ENCODE measurements at regions of chr19 and their contacts with region 1.

Region 1: DNA sequence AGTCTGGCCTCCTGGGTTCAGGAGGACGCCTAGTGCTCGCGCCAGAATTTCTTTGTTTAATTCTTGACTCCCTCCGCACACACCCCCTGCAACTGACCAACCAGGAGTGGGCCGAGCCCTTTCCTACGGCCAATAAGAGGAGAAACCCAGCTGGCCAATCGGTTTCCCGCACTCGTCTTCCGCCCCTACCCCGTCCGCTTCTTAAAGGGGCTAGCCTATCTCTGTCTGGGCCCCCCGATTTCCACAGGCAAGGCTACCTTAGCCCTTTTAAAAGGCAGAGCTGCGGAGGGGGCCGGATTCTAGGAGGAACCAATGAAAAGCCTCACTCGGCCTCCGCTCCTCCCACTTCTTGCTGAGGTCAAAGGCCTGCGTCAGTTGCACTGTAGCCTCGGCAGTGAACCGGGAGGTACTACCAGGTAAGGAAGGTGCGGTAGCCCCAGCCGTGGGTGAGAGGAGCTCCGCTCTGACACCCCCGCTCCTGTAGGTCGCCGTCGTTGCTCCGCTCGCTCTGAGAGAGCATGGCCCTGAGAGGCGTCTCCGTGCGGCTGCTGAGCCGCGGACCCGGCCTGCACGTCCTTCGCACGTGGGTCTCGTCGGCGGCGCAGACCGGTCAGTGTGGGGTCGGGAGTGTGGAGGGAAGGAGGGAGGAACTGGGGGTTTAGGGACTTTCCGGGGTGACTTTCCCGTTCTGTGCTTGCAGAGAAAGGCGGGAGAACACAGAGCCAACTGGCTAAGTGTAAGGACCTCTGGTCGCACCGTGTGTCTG is at the start of gene GCDH:
- DNase-seq: peak; percentile 96
- H3K4me3 Mint-ChIP-seq: peak within 1 kb of the TSS; percentile 95
- H3K27ac Mint-ChIP-seq: peak within 1 kb of the TSS; percentile 81
- H3K4me1 Mint-ChIP-seq: peaks cover 9% of the 10 kb centered on the region
- H3K27me3 Mint-ChIP-seq: no peaks in the 10 kb centered on the region
- total RNA-seq, gene GCDH: 51.6 and 53.2 TPM in 2 replicates

Region 2: GRCh38 chr19:12918271-12918670 is 27.3 kb after region 1 on chr19:
- intact Hi-C with region 1: loop called (anchors 2 kb)
- DNase-seq: no peak
- H3K4me3 Mint-ChIP-seq: peak overlapping the region; percentile 47
- H3K27ac Mint-ChIP-seq: peak overlapping the region; percentile 67
- H3K4me1 Mint-ChIP-seq: peaks cover 20% of the 10 kb centered on the region
- H3K27me3 Mint-ChIP-seq: no peaks in the 10 kb centered on the region

Region 3: DNA sequence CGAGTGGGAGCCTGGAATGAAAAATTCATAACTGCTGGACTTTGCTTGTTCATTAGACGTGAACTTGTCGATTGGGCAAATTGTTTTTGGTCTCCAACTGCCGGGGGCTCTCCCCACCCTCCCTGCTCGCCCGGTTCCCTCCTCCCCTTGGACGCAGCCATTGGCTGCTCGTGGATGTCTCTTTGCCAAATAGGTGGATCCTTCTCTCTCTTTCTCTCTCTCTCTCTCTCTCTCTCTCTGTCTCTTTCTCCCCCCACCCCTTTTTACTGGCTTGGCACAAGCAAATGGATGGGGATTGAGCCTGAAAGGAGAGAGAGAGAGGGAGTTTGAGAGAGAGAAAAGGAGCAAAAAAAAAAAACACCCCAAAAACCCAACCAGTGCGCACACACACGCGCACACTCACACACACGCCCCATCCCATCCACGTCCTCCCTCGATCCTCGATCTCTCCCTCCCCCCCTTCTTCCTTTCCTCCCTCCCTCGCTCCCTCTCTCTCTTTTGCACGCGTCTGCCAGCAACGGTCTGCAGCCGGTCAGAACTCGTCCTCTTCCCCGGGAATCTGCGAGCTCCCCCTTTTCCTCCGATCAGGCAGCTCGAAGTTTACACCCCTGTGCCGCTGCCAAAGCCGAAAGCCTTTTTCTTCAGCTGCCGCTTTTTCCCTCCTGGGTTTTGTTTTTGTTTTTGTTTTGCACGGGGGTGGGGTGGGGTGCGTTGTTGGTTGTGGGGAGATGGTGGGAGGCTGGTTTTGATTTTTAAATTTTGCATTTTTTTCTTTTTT is 132.1 kb after region 1 on chr19:
- intact Hi-C with region 1: no loop called
- DNase-seq: no peak
- H3K4me3 Mint-ChIP-seq: peak overlapping the region; percentile 54
- H3K27ac Mint-ChIP-seq: no peak overlapping the region
- H3K4me1 Mint-ChIP-seq: peaks cover 13% of the 10 kb centered on the region
- H3K27me3 Mint-ChIP-seq: peaks cover 56% of the 10 kb centered on the region

Measured in activated T-helper 2 cell treated with anti-CD3 and anti-CD28 coated beads, Interferon-gamma antibody, Interleukin-2, Interleukin-4, amounts not matched to agents 10 μg/mL and 5 μg/mL and 100 μg/mL, durations not matched to agents 14 hours and 24 hours and 36 hours (primary cell).